PC-3 (cell line): ENCODE measurements at regions of chr2 and their contacts with region 1.

Region 1: GRCh38 chr2:163626639-163627109 is 109.1 kb downstream of the FIGN start:
- DNase-seq: peak; percentile 81
- ATAC-seq: peak; percentile 83
- H3K4me3 ChIP-seq: no peak overlapping the region
- H3K27ac ChIP-seq: peak overlapping the region; percentile 44
- H3K4me1 ChIP-seq: peaks cover 14% of the 10 kb centered on the region
- H3K27me3 ChIP-seq: no peaks in the 10 kb centered on the region
- CTCF ChIP-seq: no peak

Region 2: DNA sequence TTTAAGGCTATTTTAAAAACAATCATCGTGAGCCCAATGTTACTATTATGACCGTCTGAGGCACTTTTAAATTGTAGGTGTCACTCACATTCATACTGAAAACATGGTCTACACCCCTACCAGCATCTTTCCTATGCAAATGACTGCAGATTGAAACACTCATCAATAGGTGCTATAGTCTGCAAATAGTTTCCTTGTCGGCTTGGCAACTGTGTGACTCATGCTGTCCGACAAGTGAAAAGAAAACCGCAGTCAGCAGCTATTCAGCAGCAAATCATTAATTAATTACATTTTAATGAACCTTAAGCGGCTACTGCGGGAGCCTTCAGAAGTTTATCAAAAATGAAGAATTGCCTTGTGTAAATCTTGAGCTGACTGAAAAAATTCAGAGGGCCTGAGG is 25.3 kb before region 1 on chr2:
- CTCF ChIA-PET with region 1: no interaction called
- POLR2A ChIA-PET with region 1: no interaction called
- intact Hi-C with region 1: loop called (anchors 1 kb)
- DNase-seq: no peak
- ATAC-seq: no peak
- H3K4me3 ChIP-seq: no peak overlapping the region
- H3K27ac ChIP-seq: no peak overlapping the region
- H3K4me1 ChIP-seq: peaks cover 15% of the 10 kb centered on the region
- H3K27me3 ChIP-seq: no peaks in the 10 kb centered on the region
- CTCF ChIP-seq: no peak

Region 3: GRCh38 chr2:163800951-163801381 is 174.3 kb after region 1 on chr2:
- CTCF ChIA-PET with region 1: no interaction called
- POLR2A ChIA-PET with region 1: no interaction called
- intact Hi-C with region 1: no loop called
- DNase-seq: peak; percentile 21
- ATAC-seq: peak; percentile 92
- H3K4me3 ChIP-seq: no peak overlapping the region
- H3K27ac ChIP-seq: no peak overlapping the region
- H3K4me1 ChIP-seq: no peaks in the 10 kb centered on the region
- H3K27me3 ChIP-seq: no peaks in the 10 kb centered on the region
- CTCF ChIP-seq: no peak